Pancreas (tissue), 10 donors: ENCODE measurements at regions of chr14 and their contacts with region 1.

Region 1: GRCh38 chr14:80845856-80846255 is 95.7 kb downstream of the CEP128 start:
- DNase-seq: no peak
- ATAC-seq: no peak
- H3K4me3 ChIP-seq: no peak overlapping the region
- H3K27ac ChIP-seq: no peak overlapping the region
- H3K4me1 ChIP-seq: no peaks in the 10 kb centered on the region
- H3K27me3 ChIP-seq: no peaks in the 10 kb centered on the region
- CTCF ChIP-seq: no peak

Region 2: DNA sequence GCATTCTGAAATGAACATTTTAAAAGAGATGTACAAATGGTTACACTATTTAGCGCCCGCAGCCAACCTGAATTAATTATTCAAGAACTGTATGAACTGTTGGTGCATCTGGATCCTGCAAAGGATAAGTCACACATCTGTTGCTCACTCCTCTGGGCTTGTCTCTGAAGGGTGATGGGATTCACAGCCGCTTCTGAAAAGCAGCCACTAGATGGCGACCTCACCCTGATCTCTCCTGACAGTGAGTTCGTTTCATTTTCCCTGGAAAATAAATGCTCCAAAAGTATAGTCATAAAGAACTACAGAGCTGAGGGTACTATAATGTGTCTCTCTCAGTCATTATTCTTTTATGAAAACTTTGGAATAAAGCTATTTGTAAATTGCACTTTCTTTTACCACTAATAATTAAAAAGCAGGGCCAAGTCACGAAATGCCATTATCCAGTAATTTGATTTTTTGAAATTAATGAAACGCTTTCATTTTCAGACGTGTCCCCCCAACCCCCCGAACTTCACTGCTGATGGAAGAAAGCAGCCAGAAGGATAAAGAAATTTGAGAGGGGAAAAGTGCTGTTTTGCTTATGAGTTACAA is 1886.1 kb before region 1 on chr14:
- intact Hi-C with region 1: loop called in 1 of 3 experiments (anchors 10 kb)
- DNase-seq: peak; percentile 40 to 82 (median 56)
- ATAC-seq: peak; percentile 67 to 91 (median 89)
- H3K4me3 ChIP-seq: peak overlapping the region in 1 of 4 donors; percentile 4
- H3K27ac ChIP-seq: no peak overlapping the region
- H3K4me1 ChIP-seq: peaks cover 0 to 3% (median 0%) of the 10 kb centered on the region in 3 donors
- H3K27me3 ChIP-seq: no peaks in the 10 kb centered on the region
- CTCF ChIP-seq: peak; percentile 73 to 87 (median 84)

Region 3: GRCh38 chr14:80055667-80056496 is 790.0 kb before region 1 on chr14:
- intact Hi-C with region 1: loop called in 1 of 3 experiments (anchors 10 kb)
- DNase-seq: peak in 4 of 6 donors; percentile 13 to 52 (median 14)
- ATAC-seq: peak; percentile 53 to 91 (median 86)
- H3K4me3 ChIP-seq: no peak overlapping the region
- H3K27ac ChIP-seq: no peak overlapping the region
- H3K4me1 ChIP-seq: no peaks in the 10 kb centered on the region
- H3K27me3 ChIP-seq: no peaks in the 10 kb centered on the region
- CTCF ChIP-seq: peak; percentile 44 to 64 (median 55)

Region 4: DNA sequence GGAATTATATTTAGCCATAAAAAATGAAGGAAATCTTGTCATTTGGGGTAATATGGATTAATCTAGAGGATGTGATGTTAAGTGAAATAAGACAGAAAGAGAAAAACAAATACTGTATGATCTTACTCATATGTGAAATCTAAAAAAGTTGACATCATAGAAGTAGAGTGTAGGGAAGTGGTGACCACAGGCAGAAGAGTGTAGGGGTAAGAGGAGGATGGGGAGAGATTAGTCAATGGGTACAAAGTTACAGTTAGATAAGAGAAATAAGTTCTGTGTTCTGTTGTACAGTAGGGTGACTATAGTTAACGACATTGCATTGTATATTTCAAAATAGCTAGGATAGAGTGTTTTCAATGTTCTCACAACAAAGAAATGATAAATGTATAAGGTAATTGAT is 196.6 kb after region 1 on chr14:
- intact Hi-C with region 1: no loop called
- DNase-seq: no peak
- ATAC-seq: no peak
- H3K4me3 ChIP-seq: no peak overlapping the region
- H3K27ac ChIP-seq: no peak overlapping the region
- H3K4me1 ChIP-seq: no peaks in the 10 kb centered on the region
- H3K27me3 ChIP-seq: no peaks in the 10 kb centered on the region
- CTCF ChIP-seq: no peak